ENCODE measurements at regions of chr4 and their contacts with region 1.

Region 1: GRCh38 chr4:185134307-185134869 is 8.7 kb upstream of the SLC25A4 start:
- DNase-seq: no peak
- ATAC-seq: peak; percentile 55
- H3K4me3 Mint-ChIP-seq: no peak overlapping the region
- H3K27ac Mint-ChIP-seq: no peak overlapping the region; the same call in 1 of the 2 replicates
- H3K4me1 Mint-ChIP-seq: peaks cover 14% of the 10 kb centered on the region
- H3K27me3 Mint-ChIP-seq: peaks cover 13% of the 10 kb centered on the region
- CTCF ChIP-seq: peak; percentile 76

Region 2: GRCh38 chr4:184745831-184746795 is 388.3 kb before region 1 on chr4:
- CTCF ChIA-PET with region 1: interaction called, 10 read pairs
- POLR2A ChIA-PET with region 1: no interaction called
- DNase-seq: peak; percentile 64
- ATAC-seq: peak; percentile 31; the same call in 1 of the 2 replicates
- H3K4me3 Mint-ChIP-seq: no peak overlapping the region
- H3K27ac Mint-ChIP-seq: 0 out of 2 replicates have a peak overlapping the region, but pooled peaks have one; percentile 9
- H3K4me1 Mint-ChIP-seq: peaks cover 41% of the 10 kb centered on the region
- H3K27me3 Mint-ChIP-seq: peaks cover 7% of the 10 kb centered on the region; the same call in 1 of the 2 replicates
- CTCF ChIP-seq: peak; percentile 57

Region 3: GRCh38 chr4:184937745-184938144 is 196.6 kb before region 1 on chr4:
- CTCF ChIA-PET with region 1: no interaction called
- POLR2A ChIA-PET with region 1: no interaction called
- DNase-seq: peak; percentile 35
- ATAC-seq: no peak
- H3K4me3 Mint-ChIP-seq: no peak overlapping the region
- H3K27ac Mint-ChIP-seq: no peak overlapping the region
- H3K4me1 Mint-ChIP-seq: peaks cover 16% of the 10 kb centered on the region
- H3K27me3 Mint-ChIP-seq: no peaks in the 10 kb centered on the region
- CTCF ChIP-seq: no peak

Region 4: GRCh38 chr4:185011408-185011807 is 123.0 kb before region 1 on chr4:
- CTCF ChIA-PET with region 1: interaction called, 11 read pairs
- POLR2A ChIA-PET with region 1: no interaction called
- DNase-seq: peak; percentile 70
- ATAC-seq: peak; percentile 53
- H3K4me3 Mint-ChIP-seq: no peak overlapping the region
- H3K27ac Mint-ChIP-seq: no peak overlapping the region
- H3K4me1 Mint-ChIP-seq: peaks cover 31% of the 10 kb centered on the region
- H3K27me3 Mint-ChIP-seq: peaks cover 92% of the 10 kb centered on the region
- CTCF ChIP-seq: peak; percentile 45

Region 5: DNA sequence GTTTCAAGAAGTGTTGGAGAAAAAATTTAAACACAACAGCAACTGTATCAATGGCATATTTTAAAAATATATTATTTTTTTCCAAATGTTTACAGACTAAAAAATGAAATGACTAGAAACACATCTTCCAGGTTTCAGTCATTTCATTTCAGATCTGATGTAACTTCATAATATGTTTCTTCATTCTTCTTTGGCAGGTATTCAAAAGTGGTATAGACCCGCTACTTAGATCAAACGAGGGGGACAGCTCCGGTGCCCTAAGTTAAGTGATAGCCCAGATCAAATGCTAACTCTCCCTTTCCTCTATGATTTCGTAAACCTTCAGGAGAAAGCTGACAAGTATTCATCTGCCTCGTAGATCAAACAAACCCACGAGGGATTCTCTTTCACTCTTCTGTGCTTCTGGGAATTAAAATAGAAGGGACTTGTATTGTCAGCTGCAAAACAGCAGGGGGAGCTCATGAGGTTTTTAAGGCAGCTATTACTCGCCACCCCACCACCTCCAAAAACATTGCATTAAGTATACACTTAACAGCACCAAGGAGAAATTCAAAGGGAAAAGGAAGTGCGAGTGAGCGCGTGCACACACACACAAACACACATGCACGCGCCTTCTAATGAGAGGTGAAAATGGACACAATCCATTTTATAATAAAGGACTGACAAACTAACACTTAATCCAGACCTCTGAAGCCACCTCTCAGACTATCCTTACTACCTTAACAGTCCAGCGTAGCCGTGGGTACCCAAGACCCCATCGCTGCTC is 94.7 kb before region 1 on chr4:
- CTCF ChIA-PET with region 1: interaction called, 55 read pairs
- POLR2A ChIA-PET with region 1: interaction called, 3 read pairs
- DNase-seq: no peak
- ATAC-seq: peak; percentile 84
- H3K4me3 Mint-ChIP-seq: no peak overlapping the region
- H3K27ac Mint-ChIP-seq: no peak overlapping the region
- H3K4me1 Mint-ChIP-seq: peaks cover 16% of the 10 kb centered on the region
- H3K27me3 Mint-ChIP-seq: peaks cover 8% of the 10 kb centered on the region
- CTCF ChIP-seq: peak; percentile 72

Region 6: GRCh38 chr4:185108669-185109068 is 25.7 kb before region 1 on chr4:
- CTCF ChIA-PET with region 1: interaction called, 11 read pairs
- POLR2A ChIA-PET with region 1: no interaction called
- DNase-seq: no peak
- ATAC-seq: no peak
- H3K4me3 Mint-ChIP-seq: no peak overlapping the region
- H3K27ac Mint-ChIP-seq: peak overlapping the region; percentile 96
- H3K4me1 Mint-ChIP-seq: peaks cover 64% of the 10 kb centered on the region
- H3K27me3 Mint-ChIP-seq: no peaks in the 10 kb centered on the region
- CTCF ChIP-seq: no peak

Region 7: GRCh38 chr4:185183619-185184281 is 49.4 kb after region 1 on chr4:
- CTCF ChIA-PET with region 1: interaction called, 14 read pairs
- POLR2A ChIA-PET with region 1: no interaction called
- DNase-seq: peak; percentile 72
- ATAC-seq: peak; percentile 78
- H3K4me3 Mint-ChIP-seq: no peak overlapping the region
- H3K27ac Mint-ChIP-seq: peak overlapping the region; percentile 83; the same call in 1 of the 2 replicates
- H3K4me1 Mint-ChIP-seq: peaks cover 30% of the 10 kb centered on the region
- H3K27me3 Mint-ChIP-seq: no peaks in the 10 kb centered on the region
- CTCF ChIP-seq: peak; percentile 41